ENCODE measurements at regions of chr1 and their contacts with region 1.

Region 1: GRCh38 chr1:234610348-234611152 is 572 bp upstream of the IRF2BP2 start:
- DNase-seq: peak; percentile 70 to 84 (median 74)
- ATAC-seq: peak; percentile 3
- H3K4me3 ChIP-seq: peak overlapping the region; percentile 38
- H3K27ac ChIP-seq: peak overlapping the region; percentile 82
- H3K4me1 ChIP-seq: peaks cover 41 to 49% of the 10 kb centered on the region in 2 experiments
- H3K27me3 ChIP-seq: no peaks in the 10 kb centered on the region
- CTCF ChIP-seq: no peak; a peak in 1 of 6 replicates
- EP300 ChIP-seq: no peak
- POLR2A ChIP-seq: peak; percentile 78
- RAD21 ChIP-seq: peak in 1 of 2 experiments; percentile 36; a peak in 2 of 4 replicates

Region 2: DNA sequence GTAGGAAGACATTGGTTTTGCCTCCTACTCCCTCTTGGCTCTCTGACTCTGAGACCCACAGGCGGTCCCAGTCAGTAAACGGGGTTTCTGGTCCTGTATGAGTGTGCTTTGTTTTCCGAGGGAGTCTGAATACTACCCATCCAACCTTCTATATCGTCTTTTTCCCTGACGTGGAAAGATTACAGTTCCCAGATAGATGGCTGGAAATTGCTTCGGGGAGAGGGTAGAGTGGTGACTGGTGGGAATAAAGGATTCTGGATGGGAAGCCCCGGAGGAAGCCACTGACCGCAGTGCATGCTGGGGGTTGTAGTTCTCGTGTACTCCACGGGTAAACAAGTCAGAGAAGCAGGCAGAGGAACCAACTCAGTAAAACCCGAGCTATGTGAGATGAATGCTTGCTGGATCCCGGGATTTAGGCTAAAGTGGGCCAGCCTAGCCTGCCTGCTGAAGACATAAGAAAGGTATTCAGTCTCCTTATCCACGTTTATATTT is 65.6 kb after region 1 on chr1:
- CTCF ChIA-PET with region 1: no interaction called
- POLR2A ChIA-PET with region 1: no interaction called
- in situ Hi-C with region 1: no loop called
- intact Hi-C with region 1: loop called (anchors 5 kb)
- DNase-seq: peak; percentile 84 to 90 (median 87)
- ATAC-seq: peak; percentile 96
- H3K4me3 ChIP-seq: peak overlapping the region; percentile 35
- H3K27ac ChIP-seq: peak overlapping the region; percentile 9; the same call in 2 of the 3 replicates
- H3K4me1 ChIP-seq: peaks cover 2 to 19% of the 10 kb centered on the region in 2 experiments; a peak in 3 of 5 replicates
- H3K27me3 ChIP-seq: no peaks in the 10 kb centered on the region
- CTCF ChIP-seq: no peak
- EP300 ChIP-seq: no peak
- POLR2A ChIP-seq: no peak; the same call in 1 of the 2 replicates
- RAD21 ChIP-seq: 0 out of 4 replicates have a peak, but pooled peaks of 1 of the 2 experiments have one; percentile 5

Region 3: GRCh38 chr1:234716908-234717375 is 106.4 kb after region 1 on chr1:
- CTCF ChIA-PET with region 1: no interaction called
- POLR2A ChIA-PET with region 1: interaction called, 15 read pairs
- in situ Hi-C with region 1: loop called (anchors 10 kb)
- intact Hi-C with region 1: no loop called
- DNase-seq: no peak
- ATAC-seq: no peak
- H3K4me3 ChIP-seq: no peak overlapping the region
- H3K27ac ChIP-seq: no peak overlapping the region
- H3K4me1 ChIP-seq: peaks cover 11 to 36% of the 10 kb centered on the region in 2 experiments; a peak in 4 of 5 replicates
- H3K27me3 ChIP-seq: no peaks in the 10 kb centered on the region
- CTCF ChIP-seq: no peak
- EP300 ChIP-seq: no peak
- POLR2A ChIP-seq: no peak
- RAD21 ChIP-seq: no peak

Region 4: DNA sequence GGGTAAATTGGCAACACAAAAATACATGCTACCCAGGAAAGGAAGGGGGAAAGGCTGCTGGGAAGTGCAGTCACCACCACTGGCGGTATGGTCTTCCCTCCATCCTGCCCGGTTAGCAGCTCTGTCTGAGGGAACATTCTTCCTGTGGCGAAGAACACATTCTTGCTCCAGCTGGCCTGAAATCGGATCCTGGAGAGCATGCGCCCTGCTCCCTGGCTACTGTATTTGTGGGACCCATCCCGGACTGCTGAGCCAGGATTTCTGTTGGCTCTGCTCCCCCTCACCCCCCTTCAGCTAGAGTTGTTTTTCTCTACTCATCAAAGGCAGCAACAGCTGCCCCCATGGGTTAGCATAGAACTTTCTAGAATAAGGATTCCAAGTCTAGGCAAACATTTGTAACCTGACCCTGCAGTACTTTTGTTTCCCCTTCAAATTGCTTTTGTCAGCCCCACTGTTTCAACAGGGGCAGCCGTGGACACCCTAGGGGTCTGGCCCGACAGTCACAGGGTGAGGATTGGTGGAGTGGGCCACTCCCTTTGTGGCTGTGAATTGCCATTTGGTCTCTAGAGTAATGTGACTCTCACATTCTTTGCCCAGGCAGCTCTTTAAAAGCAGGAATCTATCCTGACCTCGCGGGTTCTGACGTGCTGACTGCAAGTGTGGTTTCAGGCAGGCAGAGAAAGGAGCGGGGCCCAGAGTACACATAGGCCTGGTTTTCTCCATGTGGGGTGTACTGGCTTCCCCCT is 360.4 kb after region 1 on chr1:
- CTCF ChIA-PET with region 1: interaction called, 3 read pairs
- POLR2A ChIA-PET with region 1: interaction called, 3 read pairs
- in situ Hi-C with region 1: no loop called
- intact Hi-C with region 1: loop called (anchors 5 kb)
- DNase-seq: no peak
- ATAC-seq: no peak
- H3K4me3 ChIP-seq: no peak overlapping the region
- H3K27ac ChIP-seq: no peak overlapping the region
- H3K4me1 ChIP-seq: peaks cover 27 to 66% of the 10 kb centered on the region in 2 experiments
- H3K27me3 ChIP-seq: no peaks in the 10 kb centered on the region
- CTCF ChIP-seq: no peak
- EP300 ChIP-seq: no peak
- POLR2A ChIP-seq: no peak
- RAD21 ChIP-seq: no peak